ENCODE measurements at regions of chr2 and their contacts with region 1.

Region 1: DNA sequence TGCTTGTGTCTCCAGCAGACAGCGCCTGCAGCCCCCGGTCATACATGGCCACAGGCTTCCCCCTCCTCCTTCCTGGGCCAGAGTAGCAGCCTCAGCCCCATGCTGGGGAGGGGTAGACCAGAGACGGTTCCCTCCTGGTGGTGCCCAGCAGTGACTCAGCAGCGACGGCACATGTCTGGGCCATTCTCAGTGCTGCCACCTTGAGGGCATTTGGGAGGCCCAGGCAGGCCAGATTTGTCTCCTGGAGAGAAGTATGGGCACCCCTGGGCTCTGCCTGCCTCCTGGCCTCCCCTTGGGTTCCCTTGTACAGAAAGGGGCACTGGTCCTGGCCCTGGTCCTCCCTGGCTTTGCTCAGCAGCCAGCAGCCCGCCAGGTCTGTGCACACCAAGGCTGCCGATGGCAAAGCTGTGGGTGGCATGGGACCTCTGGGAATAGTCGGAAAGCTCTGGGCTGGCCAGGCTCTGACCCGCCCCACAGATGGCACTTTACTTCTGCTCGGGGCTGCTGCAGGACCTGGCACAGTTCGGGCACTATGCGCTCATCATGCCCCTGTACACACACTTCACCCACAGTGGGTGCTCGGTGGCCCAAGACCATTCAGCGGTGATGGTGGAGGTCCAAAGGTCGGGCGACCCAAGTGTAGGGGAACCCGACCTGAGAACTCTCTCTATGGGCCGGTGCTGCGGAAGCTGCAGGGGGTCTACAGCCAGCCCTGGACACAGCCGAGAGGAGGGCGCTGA is 11.4 kb upstream of the ALPI start:
- H3K4me3 ChIP-seq: no peak overlapping the region
- H3K27ac ChIP-seq: no peak overlapping the region
- H3K4me1 ChIP-seq: no peaks in the 10 kb centered on the region
- CTCF ChIP-seq: peak; percentile 28; the same call in 1 of the 2 replicates

Region 2: DNA sequence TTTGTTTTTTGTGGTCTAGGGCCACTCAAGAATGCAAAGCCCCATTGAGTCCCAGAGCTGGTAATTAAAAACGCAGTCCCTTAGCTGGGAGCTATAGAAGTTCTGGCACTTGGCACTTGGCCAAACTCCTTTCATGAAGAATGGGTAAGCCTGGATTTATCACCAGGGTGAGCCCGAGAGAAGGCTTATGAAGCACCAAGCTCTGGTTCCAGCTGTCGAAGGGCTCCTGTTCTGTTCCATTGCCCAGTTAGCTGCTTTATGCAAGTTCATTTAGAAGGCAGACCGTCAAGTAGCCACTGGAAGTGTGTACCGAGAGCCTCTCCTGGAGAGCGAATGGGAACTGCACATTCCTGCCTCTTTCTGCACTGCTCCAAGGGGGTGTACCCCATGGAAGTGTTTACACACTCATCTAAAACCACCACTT is 28.9 kb after region 1 on chr2:
- CTCF ChIA-PET with region 1: interaction called, 10 read pairs
- POLR2A ChIA-PET with region 1: no interaction called
- H3K4me3 ChIP-seq: no peak overlapping the region
- H3K27ac ChIP-seq: no peak overlapping the region
- H3K4me1 ChIP-seq: peaks cover 2% of the 10 kb centered on the region; the same call in 1 of the 2 replicates
- CTCF ChIP-seq: no peak

Region 3: GRCh38 chr2:232502911-232503808 is 58.6 kb after region 1 on chr2:
- CTCF ChIA-PET with region 1: no interaction called
- POLR2A ChIA-PET with region 1: no interaction called
- H3K4me3 ChIP-seq: peak overlapping the region; percentile 30
- H3K27ac ChIP-seq: no peak overlapping the region
- H3K4me1 ChIP-seq: no peaks in the 10 kb centered on the region
- CTCF ChIP-seq: no peak

Region 4: DNA sequence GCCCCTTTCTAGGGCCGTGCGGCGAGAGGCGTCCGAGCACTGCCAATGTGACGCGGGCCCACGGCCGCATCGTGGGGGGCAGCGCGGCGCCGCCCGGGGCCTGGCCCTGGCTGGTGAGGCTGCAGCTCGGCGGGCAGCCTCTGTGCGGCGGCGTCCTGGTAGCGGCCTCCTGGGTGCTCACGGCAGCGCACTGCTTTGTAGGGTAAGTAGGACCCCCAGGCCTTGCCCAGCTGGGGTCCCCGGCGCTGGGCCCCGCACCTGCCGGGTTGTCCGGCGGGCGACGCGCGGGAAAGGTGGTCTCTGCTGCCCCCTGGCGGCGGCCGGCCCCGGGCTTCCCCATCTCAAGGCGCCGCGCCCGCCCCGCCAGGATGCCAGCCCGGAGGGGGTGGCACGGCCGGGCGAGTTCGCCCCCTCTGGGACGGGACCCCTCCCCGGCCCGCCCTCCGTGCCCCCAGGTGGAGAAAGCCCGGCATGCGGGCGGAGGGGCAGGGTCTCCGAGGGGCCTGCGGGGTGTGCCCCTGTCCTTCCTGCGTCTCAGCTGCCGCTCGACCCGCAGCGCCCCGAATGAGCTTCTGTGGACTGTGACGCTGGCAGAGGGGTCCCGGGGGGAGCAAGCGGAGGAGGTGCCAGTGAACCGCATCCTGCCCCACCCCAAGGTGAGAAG is 77.5 kb after region 1 on chr2:
- CTCF ChIA-PET with region 1: interaction called, 77 read pairs
- POLR2A ChIA-PET with region 1: no interaction called
- H3K4me3 ChIP-seq: peak overlapping the region; percentile 6; the same call in 1 of the 2 replicates
- H3K27ac ChIP-seq: no peak overlapping the region
- H3K4me1 ChIP-seq: no peaks in the 10 kb centered on the region; the same call in 1 of the 2 replicates
- CTCF ChIP-seq: no peak

Measured in HEK293 (cell line).